ENCODE measurements at regions of chr3 and their contacts with region 1.

Region 1: DNA sequence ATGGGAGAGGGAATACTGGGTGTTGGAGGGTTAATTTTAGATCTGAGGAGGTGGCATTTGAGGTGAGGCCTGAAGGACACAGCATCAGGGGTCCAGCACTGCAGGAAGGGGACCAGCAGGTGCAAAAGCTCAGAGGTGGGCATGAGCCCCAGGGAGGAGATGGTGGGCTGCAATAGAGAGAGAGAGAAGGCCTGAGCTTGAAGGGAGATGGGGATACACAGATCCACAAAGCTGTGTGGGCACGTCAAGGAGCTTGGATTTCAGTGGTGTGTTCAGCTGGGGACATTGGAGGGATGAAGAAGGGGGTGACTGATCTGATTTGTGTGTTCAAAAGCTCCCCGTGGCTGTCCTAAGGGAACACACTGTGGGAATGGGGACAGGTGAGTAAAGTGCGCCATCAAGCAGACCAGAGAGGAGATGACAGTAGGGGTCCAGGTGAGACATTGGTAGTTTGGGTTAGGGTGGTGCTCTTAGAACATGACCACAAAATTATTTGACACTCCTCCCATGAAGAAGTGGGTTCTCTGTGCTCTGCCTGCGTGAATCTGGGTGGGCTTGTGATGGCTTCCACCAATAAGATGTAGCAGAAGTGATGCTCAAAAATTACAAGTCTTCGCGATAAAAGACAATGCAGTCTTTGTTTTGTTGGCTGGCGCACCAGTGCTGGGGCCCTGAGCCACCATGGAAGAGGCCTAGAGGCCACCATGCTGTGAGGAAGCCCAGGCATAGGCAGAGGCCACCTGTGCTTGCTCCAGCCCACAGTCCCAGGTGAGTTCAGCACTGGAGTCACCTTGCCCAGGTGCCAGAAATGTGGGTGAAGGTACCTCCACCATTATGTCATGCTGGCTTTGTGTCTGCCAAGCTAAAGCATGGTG is 1.9 kb upstream of the WNT7A start:
- DNase-seq: no peak
- ATAC-seq: no peak

Region 2: GRCh38 chr3:13657660-13658435 is 223.9 kb before region 1 on chr3:
- intact Hi-C with region 1: loop called in 1 of 2 experiments (anchors 2 kb)
- DNase-seq: peak in 1 of 2 donors; percentile 51
- ATAC-seq: peak; percentile 88